Activated CD4-positive, alpha-beta memory T cell treated with anti-CD3 and anti-CD28 coated beads for 36 hours (primary cell): ENCODE measurements at regions of chr7 and their contacts with region 1.

Region 1: GRCh38 chr7:101287032-101287431 is 34.6 kb downstream of the IFT22 start:
- DNase-seq: no peak
- H3K4me3 Mint-ChIP-seq: no peak overlapping the region
- H3K27ac Mint-ChIP-seq: no peak overlapping the region
- H3K4me1 Mint-ChIP-seq: peaks cover 20% of the 10 kb centered on the region
- H3K27me3 Mint-ChIP-seq: peaks cover 7% of the 10 kb centered on the region

Region 2: DNA sequence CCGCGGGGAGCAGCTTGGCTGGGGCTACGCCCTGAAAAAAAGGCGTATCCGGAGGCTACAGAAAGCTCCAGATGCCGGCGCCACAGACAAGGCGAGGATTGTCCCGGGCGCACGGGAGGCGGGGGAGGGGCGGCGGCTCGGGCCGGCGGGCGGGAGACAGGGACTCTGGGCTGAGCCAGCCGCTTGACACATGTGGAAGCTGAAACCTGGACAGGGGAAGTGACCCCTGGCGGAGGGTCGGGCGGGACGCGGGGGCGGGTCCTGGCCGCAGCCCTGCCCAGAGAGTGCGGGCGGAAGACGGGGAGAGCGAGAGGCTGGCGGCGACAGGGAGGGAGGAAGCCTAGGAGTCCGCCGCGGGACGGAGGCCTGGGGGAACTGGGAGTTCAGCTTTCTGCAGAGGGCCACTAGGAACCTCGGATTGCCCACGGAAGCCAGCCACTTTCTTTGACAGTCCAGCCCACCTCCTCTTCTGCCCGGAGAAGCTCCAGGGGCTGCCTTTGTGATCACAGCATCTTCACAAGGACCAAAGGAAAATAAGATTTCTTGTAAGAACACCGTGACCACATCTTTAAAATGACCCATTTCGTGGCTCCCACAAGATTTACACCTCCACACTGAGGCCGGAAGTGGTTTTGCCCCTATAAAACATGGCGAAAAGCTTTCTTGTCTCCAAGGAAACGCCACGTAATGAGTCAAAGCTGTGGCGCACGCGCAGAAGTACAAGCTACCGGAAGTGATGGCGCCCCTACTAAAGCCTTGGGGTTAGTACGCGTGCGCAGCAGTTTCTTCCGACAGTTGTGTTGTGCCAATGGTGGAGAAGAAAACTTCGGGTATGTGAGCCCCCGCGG is 69.4 kb before region 1 on chr7 and contains the starts of genes PLOD3 and ZNHIT1:
- CTCF ChIA-PET with region 1: interaction called, 27 read pairs
- POLR2A ChIA-PET with region 1: no interaction called
- intact Hi-C with region 1: no loop called
- DNase-seq: peak; percentile 98
- H3K4me3 Mint-ChIP-seq: peak within 1 kb of the TSS; percentile 92
- H3K27ac Mint-ChIP-seq: peak within 1 kb of the TSS; percentile 76
- H3K4me1 Mint-ChIP-seq: peaks cover 35% of the 10 kb centered on the region
- H3K27me3 Mint-ChIP-seq: no peaks in the 10 kb centered on the region
- total RNA-seq, gene PLOD3: 37.1 to 43.4 TPM
- total RNA-seq, gene ZNHIT1: 40.2 to 42.8 TPM

Region 3: GRCh38 chr7:101244375-101245146 is 42.5 kb before region 1 on chr7 and contains the start of gene FIS1:
- CTCF ChIA-PET with region 1: interaction called, 25 read pairs
- POLR2A ChIA-PET with region 1: interaction called, 3 read pairs
- intact Hi-C with region 1: no loop called
- DNase-seq: peak; percentile 95
- H3K4me3 Mint-ChIP-seq: peak within 1 kb of the TSS; percentile 95
- H3K27ac Mint-ChIP-seq: peak within 1 kb of the TSS; percentile 92
- H3K4me1 Mint-ChIP-seq: peaks cover 22% of the 10 kb centered on the region
- H3K27me3 Mint-ChIP-seq: no peaks in the 10 kb centered on the region
- total RNA-seq, gene FIS1: 96.1 to 98.7 TPM

Region 4: DNA sequence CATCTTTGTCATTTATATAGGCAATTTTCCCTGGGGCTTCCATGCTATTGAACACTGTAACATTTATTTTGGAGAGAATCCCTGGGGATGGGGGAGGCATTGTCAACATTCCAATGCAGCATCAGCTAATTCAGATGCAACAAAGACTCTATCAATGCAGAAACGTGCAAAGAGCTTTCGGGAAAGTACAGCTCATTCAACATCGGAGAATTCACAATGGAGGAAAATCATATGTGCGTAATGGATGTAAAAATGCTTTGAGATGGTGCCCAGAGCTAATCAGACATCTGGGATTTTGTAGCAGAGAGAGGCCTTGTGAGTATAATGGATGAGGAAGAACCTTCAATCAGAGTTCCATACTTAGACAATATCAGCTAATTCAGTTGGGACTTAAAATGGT is 13.8 kb before region 1 on chr7:
- CTCF ChIA-PET with region 1: interaction called, 13 read pairs
- POLR2A ChIA-PET with region 1: no interaction called
- intact Hi-C with region 1: no loop called
- DNase-seq: no peak
- H3K4me3 Mint-ChIP-seq: no peak overlapping the region
- H3K27ac Mint-ChIP-seq: no peak overlapping the region
- H3K4me1 Mint-ChIP-seq: no peaks in the 10 kb centered on the region
- H3K27me3 Mint-ChIP-seq: peaks cover 14% of the 10 kb centered on the region

Region 5: DNA sequence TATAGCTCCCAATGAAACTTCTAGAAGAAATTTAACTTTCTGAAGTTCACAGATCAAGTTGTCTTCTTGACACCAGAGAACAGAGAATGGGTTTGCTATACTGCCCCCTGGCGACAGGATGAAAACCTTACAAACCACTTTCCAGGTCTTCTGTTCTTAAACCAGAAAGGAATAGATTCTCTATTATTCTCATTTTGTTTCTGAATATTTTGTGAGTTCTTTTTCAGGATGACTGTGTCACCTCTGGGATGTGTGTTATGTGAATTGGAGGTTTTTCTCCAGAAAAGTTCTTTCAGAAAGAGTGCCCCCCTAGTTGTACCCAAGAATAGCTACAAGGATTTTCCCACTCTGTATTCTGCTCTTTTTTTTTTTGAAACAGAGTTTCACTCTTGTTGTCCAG is 28.3 kb after region 1 on chr7:
- CTCF ChIA-PET with region 1: interaction called, 29 read pairs
- POLR2A ChIA-PET with region 1: no interaction called
- intact Hi-C with region 1: no loop called
- DNase-seq: peak; percentile 64
- H3K4me3 Mint-ChIP-seq: no peak overlapping the region
- H3K27ac Mint-ChIP-seq: no peak overlapping the region
- H3K4me1 Mint-ChIP-seq: no peaks in the 10 kb centered on the region
- H3K27me3 Mint-ChIP-seq: no peaks in the 10 kb centered on the region